Dendritic cell treated with granulocyte-macrophage colony-stimulating factor and Interleukin-4, amounts not matched to agents 40 ng/mL and 50 ng/mL, for 4 days (primary cell): ENCODE measurements at regions of chr18 and their contacts with region 1.

Region 1: DNA sequence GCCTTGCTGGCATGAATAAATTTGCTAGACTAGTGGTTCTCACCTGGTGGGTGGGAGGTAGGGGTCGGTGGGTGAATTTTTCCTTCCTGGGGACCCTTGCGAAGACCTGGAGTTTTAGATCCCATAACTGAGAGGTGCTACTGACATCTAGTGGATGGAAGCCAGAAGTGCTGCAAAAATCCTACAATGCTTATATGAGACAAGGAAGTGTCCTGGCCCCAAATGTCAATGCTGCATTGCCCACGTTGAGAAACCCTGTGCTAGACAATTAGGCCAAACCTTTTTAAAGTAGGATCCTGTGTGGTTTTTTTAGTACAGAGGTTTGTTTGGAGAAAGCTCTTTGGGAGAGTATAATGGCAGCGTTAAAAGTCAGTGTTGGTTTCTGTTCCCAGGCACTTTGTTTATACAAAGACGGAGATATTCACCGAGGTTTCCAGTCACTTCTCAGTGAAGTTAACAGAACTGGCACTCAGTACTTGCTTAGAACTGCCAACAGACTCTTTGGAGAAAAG is 9.6 kb downstream of the SERPINB8 start:
- H3K4me3 Mint-ChIP-seq: no peak overlapping the region
- H3K27ac Mint-ChIP-seq: peak overlapping the region; percentile 74
- H3K4me1 Mint-ChIP-seq: peaks cover 69% of the 10 kb centered on the region
- H3K27me3 Mint-ChIP-seq: no peaks in the 10 kb centered on the region

Region 2: GRCh38 chr18:63433334-63433866 is 546.1 kb before region 1 on chr18:
- intact Hi-C with region 1: no loop called
- H3K4me3 Mint-ChIP-seq: no peak overlapping the region
- H3K27ac Mint-ChIP-seq: no peak overlapping the region
- H3K4me1 Mint-ChIP-seq: peaks cover 6% of the 10 kb centered on the region
- H3K27me3 Mint-ChIP-seq: no peaks in the 10 kb centered on the region

Region 3: DNA sequence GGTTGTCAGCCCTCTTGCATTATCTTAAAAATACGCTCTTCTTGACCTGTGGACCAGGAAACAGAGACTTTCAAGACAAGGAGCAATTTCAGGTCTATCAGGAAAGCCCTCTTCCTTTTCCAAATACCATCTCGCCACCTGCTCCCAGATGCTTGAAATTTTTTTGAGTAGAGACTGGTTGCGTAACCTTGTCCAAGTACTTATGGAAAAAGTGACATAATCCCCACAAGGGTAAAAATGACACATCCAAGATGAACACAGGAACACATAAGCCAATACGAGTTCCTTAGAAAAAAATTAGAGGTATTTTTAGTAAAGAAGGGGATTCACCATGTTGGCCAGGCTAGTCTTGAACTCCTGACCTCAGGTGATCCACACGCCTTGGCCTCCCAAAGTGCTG is 390.6 kb before region 1 on chr18:
- intact Hi-C with region 1: loop called (anchors 10 kb)
- H3K4me3 Mint-ChIP-seq: no peak overlapping the region
- H3K27ac Mint-ChIP-seq: no peak overlapping the region
- H3K4me1 Mint-ChIP-seq: peaks cover 53% of the 10 kb centered on the region
- H3K27me3 Mint-ChIP-seq: no peaks in the 10 kb centered on the region

Region 4: GRCh38 chr18:63890950-63891304 is 88.5 kb before region 1 on chr18:
- intact Hi-C with region 1: loop called (anchors 1 kb)
- H3K4me3 Mint-ChIP-seq: no peak overlapping the region
- H3K27ac Mint-ChIP-seq: peak overlapping the region; percentile 62
- H3K4me1 Mint-ChIP-seq: peaks cover 80% of the 10 kb centered on the region
- H3K27me3 Mint-ChIP-seq: no peaks in the 10 kb centered on the region

Region 5: DNA sequence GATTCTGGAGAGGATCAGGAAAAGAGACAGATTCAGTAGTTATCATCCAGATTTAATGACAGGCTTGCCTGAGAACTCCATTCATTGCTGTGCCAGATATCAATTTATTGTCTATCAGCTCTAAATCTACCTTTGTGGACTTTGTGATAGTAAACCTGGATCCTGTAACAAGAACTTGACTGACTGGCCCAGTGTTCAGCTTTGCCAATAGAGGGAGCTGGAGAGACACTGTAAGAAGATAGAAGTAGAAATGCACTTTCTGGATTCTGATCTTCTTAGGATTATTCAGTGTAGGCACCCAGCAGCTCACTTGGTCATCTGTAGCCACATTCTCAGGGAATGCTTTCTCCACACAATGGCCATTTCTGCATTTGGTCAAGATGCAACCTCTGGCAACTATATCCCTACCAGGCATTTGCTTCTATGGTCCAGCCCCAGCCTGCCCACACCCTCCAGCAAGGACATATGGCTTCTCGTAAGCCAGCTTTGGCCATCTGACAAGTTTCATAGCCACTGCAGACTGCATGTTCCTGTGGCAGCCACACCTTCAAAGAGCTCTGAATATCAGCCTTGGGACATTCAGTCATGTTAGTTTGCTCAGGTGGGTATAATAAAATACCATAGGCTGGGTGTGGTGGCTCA is 15.7 kb before region 1 on chr18:
- intact Hi-C with region 1: loop called (anchors 1 kb)
- H3K4me3 Mint-ChIP-seq: no peak overlapping the region
- H3K27ac Mint-ChIP-seq: peak overlapping the region; percentile 30
- H3K4me1 Mint-ChIP-seq: peaks cover 50% of the 10 kb centered on the region
- H3K27me3 Mint-ChIP-seq: no peaks in the 10 kb centered on the region